K562 (cell line): ENCODE measurements at regions of chr12 and their contacts with region 1.

Region 1: GRCh38 chr12:53481957-53482586 is 17.2 kb downstream of the MAP3K12 start:
- DNase-seq: peak in 1 of 4 experiments; percentile 37
- ATAC-seq: peak; percentile 61
- H3K4me3 ChIP-seq: no peak overlapping the region
- H3K27ac ChIP-seq: no peak overlapping the region
- H3K4me1 ChIP-seq: peaks cover 0 to 13% of the 10 kb centered on the region in 2 experiments; a peak in 3 of 5 replicates
- H3K27me3 ChIP-seq: no peaks in the 10 kb centered on the region
- CTCF ChIP-seq: peak; percentile 22 to 37 (median 31); a peak in 5 of 6 replicates
- EP300 ChIP-seq: no peak
- POLR2A ChIP-seq: peak; percentile 59
- RAD21 ChIP-seq: no peak

Region 2: GRCh38 chr12:53465679-53466078 is 16.4 kb before region 1 on chr12:
- CTCF ChIA-PET with region 1: no interaction called
- POLR2A ChIA-PET with region 1: interaction called, 99 read pairs
- in situ Hi-C with region 1: no loop called
- intact Hi-C with region 1: no loop called
- DNase-seq: no peak
- ATAC-seq: no peak
- H3K4me3 ChIP-seq: no peak overlapping the region
- H3K27ac ChIP-seq: no peak overlapping the region
- H3K4me1 ChIP-seq: peaks cover 0 to 3% of the 10 kb centered on the region in 2 experiments; a peak in 1 of 5 replicates
- H3K27me3 ChIP-seq: no peaks in the 10 kb centered on the region
- CTCF ChIP-seq: no peak
- EP300 ChIP-seq: no peak
- POLR2A ChIP-seq: no peak
- RAD21 ChIP-seq: no peak

Region 3: DNA sequence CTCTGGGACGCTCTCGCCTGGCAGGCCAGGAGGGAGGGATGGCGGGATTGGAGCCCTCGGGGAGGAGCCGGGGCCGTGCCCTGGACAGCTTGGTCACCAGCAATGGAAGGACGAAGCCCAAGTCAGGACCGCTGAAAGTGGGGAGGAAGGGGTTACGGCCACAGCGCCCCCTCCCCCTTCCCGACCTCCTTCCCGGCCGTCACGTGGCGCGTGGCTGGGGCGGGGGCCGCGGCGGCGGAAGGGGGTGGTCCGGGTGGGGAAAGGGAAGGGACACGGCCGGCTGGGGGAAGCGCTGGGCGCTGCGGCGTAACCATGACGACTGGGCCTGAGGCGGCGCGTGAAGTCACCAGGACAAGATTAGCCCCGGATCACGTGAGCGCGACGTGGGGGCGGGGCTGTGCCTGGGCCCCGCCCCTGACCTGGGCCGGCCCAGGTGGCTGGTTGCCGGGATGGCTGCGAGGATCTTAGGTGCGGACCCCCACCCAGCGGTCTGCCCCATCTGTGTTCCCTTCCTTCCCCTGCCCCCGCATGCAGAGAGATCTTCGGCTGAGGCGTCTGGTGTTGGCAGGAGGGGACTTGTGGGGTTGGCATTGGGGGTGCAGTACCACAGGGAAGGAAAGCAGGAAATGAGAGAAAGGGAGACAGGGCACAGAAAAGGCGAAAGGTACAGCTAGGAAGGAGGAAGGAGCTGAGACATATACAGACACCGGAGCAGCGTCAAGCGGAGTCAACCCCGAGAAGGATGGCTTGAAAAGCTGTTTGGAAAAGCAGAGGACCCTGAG is 10.9 kb after region 1 on chr12:
- CTCF ChIA-PET with region 1: no interaction called
- POLR2A ChIA-PET with region 1: interaction called, 13 read pairs
- in situ Hi-C with region 1: no loop called
- intact Hi-C with region 1: no loop called
- DNase-seq: peak; percentile 91 to 96 (median 93)
- ATAC-seq: peak; percentile 93
- H3K4me3 ChIP-seq: peak overlapping the region; percentile 47
- H3K27ac ChIP-seq: peak overlapping the region; percentile 56
- H3K4me1 ChIP-seq: peaks cover 29 to 40% of the 10 kb centered on the region in 2 experiments; a peak in 4 of 5 replicates
- H3K27me3 ChIP-seq: no peaks in the 10 kb centered on the region
- CTCF ChIP-seq: no peak
- EP300 ChIP-seq: no peak
- POLR2A ChIP-seq: peak; percentile 69
- RAD21 ChIP-seq: no peak

Region 4: GRCh38 chr12:53500776-53501614 is 18.9 kb after region 1 on chr12 and contains the start of gene TARBP2:
- CTCF ChIA-PET with region 1: no interaction called
- POLR2A ChIA-PET with region 1: interaction called, 24 read pairs
- in situ Hi-C with region 1: no loop called
- intact Hi-C with region 1: no loop called
- DNase-seq: peak; percentile 85 to 98 (median 88)
- ATAC-seq: peak; percentile 86
- H3K4me3 ChIP-seq: peak within 1 kb of the TSS; percentile 79
- H3K27ac ChIP-seq: peak within 1 kb of the TSS; percentile 97
- H3K4me1 ChIP-seq: peaks cover 33 to 47% of the 10 kb centered on the region in 2 experiments; a peak in 4 of 5 replicates
- H3K27me3 ChIP-seq: no peaks in the 10 kb centered on the region
- CTCF ChIP-seq: no peak
- EP300 ChIP-seq: no peak
- POLR2A ChIP-seq: peak; percentile 96
- RAD21 ChIP-seq: no peak
- polyA plus RNA-seq, gene TARBP2: 5.6 to 16.6 TPM